ENCODE measurements at regions of chr6 and their contacts with region 1.

Region 1: DNA sequence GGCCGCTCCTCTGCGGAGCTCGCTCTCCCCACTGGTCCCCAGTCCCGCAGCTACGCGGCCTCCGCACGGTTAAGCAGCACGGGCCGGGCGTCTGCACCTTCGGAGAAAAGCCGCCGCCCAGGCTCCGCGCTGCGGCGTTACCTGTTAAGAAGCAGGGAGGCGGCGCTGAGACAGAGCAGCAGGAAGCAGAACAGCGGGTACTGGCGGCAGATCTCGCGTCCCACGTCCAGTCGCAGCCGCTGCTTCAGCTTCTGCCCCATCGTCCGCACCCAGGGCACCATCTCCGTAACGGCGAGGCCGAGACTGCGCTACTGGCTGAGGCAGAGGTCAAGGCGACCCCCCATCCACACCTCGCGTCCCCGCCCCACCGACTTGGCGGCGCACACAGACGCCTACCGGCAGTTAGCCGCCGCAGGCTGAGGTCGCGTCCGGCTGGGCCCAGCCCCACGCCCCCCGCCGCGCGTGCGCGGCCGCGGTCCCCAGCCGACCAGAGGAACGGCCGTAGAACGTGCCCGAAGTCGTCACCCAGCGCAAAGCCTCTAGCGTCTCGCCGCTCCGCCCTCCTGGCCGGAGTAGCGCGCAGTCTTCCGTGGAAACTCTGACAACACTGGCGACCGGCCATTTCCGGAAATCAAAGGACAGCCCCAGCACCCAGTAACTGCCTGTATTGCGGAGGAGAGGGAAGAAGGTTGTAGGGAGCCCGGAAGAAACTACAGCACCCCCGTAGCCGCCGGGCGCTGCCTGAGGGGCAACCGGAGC is at the start of gene SNX14:
- DNase-seq: peak; percentile 74 to 87 (median 78)
- H3K4me3 ChIP-seq: peak within 1 kb of the TSS; percentile 59 to 86
- H3K4me3 Mint-ChIP-seq: peak within 1 kb of the TSS; percentile 92 to 98 (median 96)
- H3K27ac ChIP-seq: peak within 1 kb of the TSS; percentile 83
- H3K27ac Mint-ChIP-seq: peak within 1 kb of the TSS; percentile 96 to 99 (median 98)
- H3K4me1 ChIP-seq: peaks cover 33% of the 10 kb centered on the region
- H3K4me1 Mint-ChIP-seq: peaks cover 29 to 56% (median 43%) of the 10 kb centered on the region in 4 donors
- H3K27me3 ChIP-seq: no peaks in the 10 kb centered on the region
- H3K27me3 Mint-ChIP-seq: no peaks in the 10 kb centered on the region
- total RNA-seq, gene SNX14: 63.0 to 70.3 TPM

Region 2: DNA sequence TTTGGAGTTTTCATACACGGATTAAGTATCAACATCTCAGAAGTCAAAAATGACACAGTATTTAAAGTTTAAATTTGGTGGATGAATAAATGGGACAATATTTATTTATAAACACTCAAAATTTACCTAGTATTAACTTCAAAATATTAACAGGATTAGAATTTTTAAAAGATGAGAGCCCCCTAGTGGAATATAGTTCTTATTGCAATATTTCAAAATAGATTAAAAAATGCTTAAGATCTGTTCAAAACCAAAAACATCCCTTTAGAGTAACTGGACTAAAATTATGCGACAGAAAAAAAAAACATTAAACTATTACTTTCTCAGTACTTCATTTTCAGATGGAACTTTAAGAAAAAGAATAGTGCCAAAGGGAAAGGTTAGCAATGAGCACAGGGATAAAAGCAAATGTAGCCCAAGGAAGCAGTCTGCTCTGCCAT is 56.5 kb before region 1 on chr6:
- CTCF ChIA-PET with region 1: interaction called, 5 read pairs
- POLR2A ChIA-PET with region 1: no interaction called
- intact Hi-C with region 1: loop called (anchors 5 kb)
- DNase-seq: peak in 1 of 5 donors; percentile 6
- H3K4me3 ChIP-seq: no peak overlapping the region
- H3K4me3 Mint-ChIP-seq: no peak overlapping the region
- H3K27ac ChIP-seq: no peak overlapping the region
- H3K27ac Mint-ChIP-seq: peak overlapping the region in 1 of 7 donors; percentile 12
- H3K4me1 ChIP-seq: no peaks in the 10 kb centered on the region
- H3K4me1 Mint-ChIP-seq: peaks cover 0 to 2% (median under 1%) of the 10 kb centered on the region in 4 donors
- H3K27me3 ChIP-seq: no peaks in the 10 kb centered on the region
- H3K27me3 Mint-ChIP-seq: no peaks in the 10 kb centered on the region

Region 3: GRCh38 chr6:85580882-85581267 is 12.7 kb before region 1 on chr6:
- CTCF ChIA-PET with region 1: interaction called, 3 read pairs
- POLR2A ChIA-PET with region 1: interaction called, 11 read pairs
- intact Hi-C with region 1: no loop called
- DNase-seq: no peak
- H3K4me3 ChIP-seq: no peak overlapping the region
- H3K4me3 Mint-ChIP-seq: no peak overlapping the region
- H3K27ac ChIP-seq: no peak overlapping the region
- H3K27ac Mint-ChIP-seq: peak overlapping the region in 1 of 7 donors; percentile 11
- H3K4me1 ChIP-seq: peaks cover 19% of the 10 kb centered on the region
- H3K4me1 Mint-ChIP-seq: peaks cover 22 to 38% (median 27%) of the 10 kb centered on the region in 4 donors
- H3K27me3 ChIP-seq: no peaks in the 10 kb centered on the region
- H3K27me3 Mint-ChIP-seq: no peaks in the 10 kb centered on the region

Region 4: GRCh38 chr6:85612690-85613474 is 19.3 kb after region 1 on chr6:
- CTCF ChIA-PET with region 1: interaction called, 5 read pairs
- POLR2A ChIA-PET with region 1: interaction called, 10 read pairs
- intact Hi-C with region 1: no loop called
- DNase-seq: no peak
- H3K4me3 ChIP-seq: no peak overlapping the region
- H3K4me3 Mint-ChIP-seq: no peak overlapping the region
- H3K27ac ChIP-seq: no peak overlapping the region
- H3K27ac Mint-ChIP-seq: peak overlapping the region in 3 of 7 donors; percentile 19 to 42 (median 35)
- H3K4me1 ChIP-seq: no peaks in the 10 kb centered on the region
- H3K4me1 Mint-ChIP-seq: peaks cover 5 to 10% (median 7%) of the 10 kb centered on the region in 4 donors
- H3K27me3 ChIP-seq: no peaks in the 10 kb centered on the region
- H3K27me3 Mint-ChIP-seq: no peaks in the 10 kb centered on the region

Region 5: GRCh38 chr6:85642774-85643536 is 49.3 kb after region 1 on chr6 and contains the start of gene SYNCRIP:
- CTCF ChIA-PET with region 1: interaction called, 17 read pairs
- POLR2A ChIA-PET with region 1: interaction called, 156 read pairs
- intact Hi-C with region 1: loop called (anchors 1 kb)
- DNase-seq: peak; percentile 97 to 99 (median 99)
- H3K4me3 ChIP-seq: peak within 1 kb of the TSS; percentile 82 to 98
- H3K4me3 Mint-ChIP-seq: peak within 1 kb of the TSS; percentile 92 to 98 (median 94)
- H3K27ac ChIP-seq: peak within 1 kb of the TSS; percentile 96
- H3K27ac Mint-ChIP-seq: peak within 1 kb of the TSS; percentile 98 to 100 (median 99)
- H3K4me1 ChIP-seq: peaks cover 43% of the 10 kb centered on the region
- H3K4me1 Mint-ChIP-seq: peaks cover 38 to 65% (median 47%) of the 10 kb centered on the region in 4 donors
- H3K27me3 ChIP-seq: no peaks in the 10 kb centered on the region
- H3K27me3 Mint-ChIP-seq: peaks cover 0 to 2% of the 10 kb centered on the region in 2 donors
- total RNA-seq, gene SYNCRIP: 81.4 to 84.3 TPM

Region 6: DNA sequence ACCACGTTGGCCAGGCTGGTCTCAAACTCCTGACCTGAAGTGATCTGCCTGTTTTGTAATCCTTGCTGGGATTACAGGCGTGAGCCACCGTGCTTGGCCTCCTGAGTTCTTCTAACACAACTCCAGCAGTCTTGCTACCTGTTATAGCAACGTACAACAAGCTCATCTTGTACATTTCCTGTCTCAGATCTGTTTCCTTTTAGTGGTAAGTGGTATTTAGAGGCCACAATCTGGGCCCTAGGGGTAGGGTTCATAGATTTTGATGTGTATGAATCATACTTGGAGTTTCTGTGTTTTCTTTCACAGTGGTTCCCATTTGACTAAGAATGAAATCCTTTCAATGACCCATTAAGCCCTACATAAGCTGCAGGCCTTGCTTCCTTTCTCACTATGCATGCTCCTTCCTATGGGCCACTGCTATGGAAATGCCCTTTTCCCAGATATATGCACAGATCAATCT is 76.1 kb after region 1 on chr6:
- CTCF ChIA-PET with region 1: interaction called, 3 read pairs
- POLR2A ChIA-PET with region 1: interaction called, 41 read pairs
- intact Hi-C with region 1: loop called (anchors 2 kb)
- DNase-seq: peak; percentile 59 to 76 (median 71)
- H3K4me3 ChIP-seq: no peak overlapping the region
- H3K4me3 Mint-ChIP-seq: peak overlapping the region; percentile 66 to 86 (median 78)
- H3K27ac ChIP-seq: peak overlapping the region; percentile 58
- H3K27ac Mint-ChIP-seq: peak overlapping the region; percentile 95 to 98 (median 97)
- H3K4me1 ChIP-seq: peaks cover 55% of the 10 kb centered on the region
- H3K4me1 Mint-ChIP-seq: peaks cover 40 to 59% (median 52%) of the 10 kb centered on the region in 4 donors
- H3K27me3 ChIP-seq: no peaks in the 10 kb centered on the region
- H3K27me3 Mint-ChIP-seq: no peaks in the 10 kb centered on the region

Region 7: DNA sequence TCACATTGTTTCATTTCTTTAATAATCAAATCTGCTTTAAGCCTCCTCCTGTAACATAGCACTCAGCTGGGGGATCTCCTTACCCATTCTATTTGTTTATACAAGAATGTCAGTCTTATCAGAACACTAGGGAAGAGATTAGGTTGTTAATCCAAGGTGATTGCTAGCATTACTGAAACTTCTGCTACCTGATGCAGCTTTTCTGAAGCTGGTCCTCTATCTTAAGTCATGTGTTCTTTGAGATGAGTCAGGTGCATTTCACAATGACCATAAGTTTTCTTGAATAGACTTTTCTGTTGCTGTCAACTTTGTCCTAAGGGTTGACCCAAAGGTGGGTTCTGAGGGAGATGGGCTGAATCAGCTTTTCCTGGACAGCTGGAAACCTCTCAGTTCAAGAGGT is 109.8 kb after region 1 on chr6:
- CTCF ChIA-PET with region 1: no interaction called
- POLR2A ChIA-PET with region 1: no interaction called
- intact Hi-C with region 1: no loop called
- DNase-seq: no peak
- H3K4me3 ChIP-seq: no peak overlapping the region
- H3K4me3 Mint-ChIP-seq: no peak overlapping the region
- H3K27ac ChIP-seq: no peak overlapping the region
- H3K27ac Mint-ChIP-seq: no peak overlapping the region
- H3K4me1 ChIP-seq: no peaks in the 10 kb centered on the region
- H3K4me1 Mint-ChIP-seq: no peaks in the 10 kb centered on the region
- H3K27me3 ChIP-seq: no peaks in the 10 kb centered on the region
- H3K27me3 Mint-ChIP-seq: peaks cover 0 to 7% of the 10 kb centered on the region in 2 donors